Sciatic nerve (tissue), 2 donors: ENCODE measurements at regions of chr4 and their contacts with region 1.

Region 1: GRCh38 chr4:108060164-108060563 is 70.5 kb downstream of the HADH start:
- DNase-seq: no peak
- ATAC-seq: peak; percentile 74

Region 2: GRCh38 chr4:106149026-106149425 is 1911.1 kb before region 1 on chr4:
- intact Hi-C with region 1: no loop called
- DNase-seq: no peak
- ATAC-seq: no peak

Region 3: DNA sequence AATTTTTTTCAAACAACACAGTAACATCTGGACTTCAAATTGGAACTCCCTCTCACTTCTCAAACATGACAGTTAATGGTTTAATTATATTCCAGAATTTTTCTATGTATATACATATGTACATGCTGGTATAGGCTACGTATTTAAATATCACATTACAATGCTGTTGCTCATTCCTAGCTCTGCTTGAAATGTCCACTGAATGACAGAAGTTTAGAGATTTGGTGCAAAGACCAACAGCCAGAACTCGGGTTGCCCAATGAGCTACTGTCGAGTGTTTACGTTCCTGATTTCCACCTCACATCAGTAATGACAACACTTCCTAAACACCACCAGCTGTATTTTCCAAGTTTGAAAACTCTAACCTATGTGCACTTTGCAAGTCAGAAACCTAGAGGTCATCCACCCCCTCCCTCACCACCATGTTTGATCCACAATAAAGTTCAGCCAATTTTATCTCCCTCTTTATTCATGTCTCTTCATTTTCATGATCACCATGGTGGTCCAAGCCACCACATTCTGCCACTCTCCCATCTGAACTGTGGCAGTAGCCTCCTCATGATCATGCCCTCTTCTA is 510.9 kb after region 1 on chr4:
- intact Hi-C with region 1: loop called (anchors 10 kb)
- DNase-seq: no peak
- ATAC-seq: no peak